GM10248 (cell line): ENCODE measurements at regions of chr2 and their contacts with region 1.

Region 1: DNA sequence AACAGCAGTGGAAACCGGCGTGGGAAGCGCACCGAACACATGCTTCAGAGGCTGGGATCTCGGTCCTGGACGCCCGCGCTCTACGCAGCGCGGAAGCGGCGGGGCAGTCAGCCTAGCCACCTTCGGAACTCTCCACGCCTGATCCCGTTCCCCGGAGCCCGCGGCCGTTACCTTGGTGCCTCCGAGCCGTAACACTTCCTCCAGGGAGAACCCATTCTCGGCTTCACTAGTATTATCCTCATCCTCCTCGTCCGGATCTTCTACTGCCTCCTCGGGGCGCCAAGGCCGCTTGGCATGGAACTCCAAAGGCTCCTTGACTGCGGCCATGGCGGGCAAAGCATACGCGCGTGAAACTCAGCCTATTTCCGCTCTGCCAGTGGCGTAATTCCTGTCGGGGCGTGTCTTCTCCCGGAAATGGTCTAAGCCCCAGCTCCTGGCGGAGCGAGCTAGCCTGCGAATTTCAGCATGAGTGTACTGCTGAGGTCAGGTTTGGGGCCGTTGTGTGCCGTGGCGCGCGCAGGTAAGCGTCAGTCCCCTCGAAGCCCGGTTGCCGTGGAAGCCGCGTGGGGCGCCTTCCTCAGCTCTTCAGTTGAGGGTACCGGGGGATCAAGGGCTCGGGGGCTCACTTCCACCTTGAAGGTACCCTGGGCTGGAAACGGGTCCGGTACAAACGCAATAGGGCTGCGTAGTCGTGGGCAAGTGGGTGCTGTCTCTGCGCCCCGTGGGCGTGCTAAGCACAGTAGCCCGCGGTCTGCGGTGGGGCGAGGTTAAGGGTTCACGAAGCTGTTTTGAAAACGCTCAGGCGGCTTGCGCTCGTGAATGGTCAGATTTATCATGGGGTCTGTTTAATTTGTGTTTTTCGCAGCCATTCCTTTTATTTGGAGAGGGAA is at the starts of genes CEBPZ and NDUFAF7:
- DNase-seq: peak; percentile 94
- CTCF ChIP-seq: no peak

Region 2: DNA sequence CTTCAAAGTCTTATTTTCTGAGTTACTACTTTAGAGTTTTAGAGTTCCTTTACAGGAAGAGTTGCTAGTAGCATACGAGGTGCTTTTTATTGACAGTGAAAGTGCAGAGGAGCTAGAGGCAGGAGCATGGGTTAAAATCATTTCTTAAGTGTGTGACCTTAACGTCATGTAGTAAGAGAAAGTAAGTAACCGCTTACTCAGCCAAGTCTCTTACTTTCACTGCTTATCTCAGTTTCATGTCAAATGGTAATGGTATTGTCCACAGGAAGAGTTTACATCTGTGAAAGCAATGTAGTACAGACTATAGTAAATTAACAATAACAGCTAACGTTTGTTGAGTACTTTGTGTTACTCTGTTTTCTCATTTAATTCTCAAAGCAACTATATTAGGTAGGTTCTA is 12.5 kb after region 1 on chr2:
- CTCF ChIA-PET with region 1: interaction called, 6 read pairs
- POLR2A ChIA-PET with region 1: interaction called, 12 read pairs
- DNase-seq: peak; percentile 39
- CTCF ChIP-seq: no peak